ENCODE measurements at regions of chr1 and their contacts with region 1.

Region 1: DNA sequence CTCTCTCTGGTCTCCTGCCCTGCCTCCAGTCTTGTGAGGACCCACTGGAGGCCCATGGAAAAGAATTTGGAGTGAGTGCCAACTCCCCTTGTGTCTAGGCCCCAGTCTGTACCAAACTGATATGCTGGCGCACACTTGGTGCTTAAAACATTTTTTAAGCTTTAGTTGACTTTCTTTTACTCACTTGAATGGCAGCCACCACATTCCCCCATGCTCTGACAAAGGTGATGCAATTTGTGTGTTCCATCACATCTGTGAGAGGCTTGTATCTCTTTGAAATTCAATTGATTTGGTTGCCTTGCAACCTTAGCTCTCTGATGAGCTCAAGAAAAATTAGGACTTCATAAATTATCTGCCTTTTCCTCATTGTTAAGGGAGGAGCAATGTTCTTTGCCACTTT is 30.5 kb upstream of the WDTC1 start:
- DNase-seq: no peak
- H3K4me3 ChIP-seq: no peak overlapping the region
- H3K27ac ChIP-seq: no peak overlapping the region
- H3K4me1 ChIP-seq: no peaks in the 10 kb centered on the region
- H3K27me3 ChIP-seq: no peaks in the 10 kb centered on the region
- CTCF ChIP-seq: no peak

Region 2: GRCh38 chr1:27154991-27155781 is 48.8 kb before region 1 on chr1 and contains the start of gene SLC9A1:
- CTCF ChIA-PET with region 1: no interaction called
- dilution Hi-C with region 1: no loop called
- in situ Hi-C with region 1: no loop called
- intact Hi-C with region 1: no loop called
- DNase-seq: peak; percentile 89
- H3K4me3 ChIP-seq: peak within 1 kb of the TSS; percentile 66 to 76 (median 69)
- H3K27ac ChIP-seq: peak within 1 kb of the TSS; percentile 89
- H3K4me1 ChIP-seq: peaks cover 37% of the 10 kb centered on the region
- H3K27me3 ChIP-seq: no peaks in the 10 kb centered on the region
- CTCF ChIP-seq: peak; percentile 72 to 91
- total RNA-seq, gene SLC9A1: 9.5 to 124 TPM

Region 3: GRCh38 chr1:27275696-27276095 is 71.8 kb after region 1 on chr1:
- CTCF ChIA-PET with region 1: no interaction called
- dilution Hi-C with region 1: no loop called
- in situ Hi-C with region 1: loop called (anchors 5 to 10 kb)
- intact Hi-C with region 1: no loop called
- DNase-seq: no peak
- H3K4me3 ChIP-seq: no peak overlapping the region
- H3K27ac ChIP-seq: no peak overlapping the region
- H3K4me1 ChIP-seq: no peaks in the 10 kb centered on the region
- H3K27me3 ChIP-seq: no peaks in the 10 kb centered on the region
- CTCF ChIP-seq: no peak